Heart left ventricle (tissue), 16 donors: ENCODE measurements at regions of chr17 and their contacts with region 1.

Region 1: DNA sequence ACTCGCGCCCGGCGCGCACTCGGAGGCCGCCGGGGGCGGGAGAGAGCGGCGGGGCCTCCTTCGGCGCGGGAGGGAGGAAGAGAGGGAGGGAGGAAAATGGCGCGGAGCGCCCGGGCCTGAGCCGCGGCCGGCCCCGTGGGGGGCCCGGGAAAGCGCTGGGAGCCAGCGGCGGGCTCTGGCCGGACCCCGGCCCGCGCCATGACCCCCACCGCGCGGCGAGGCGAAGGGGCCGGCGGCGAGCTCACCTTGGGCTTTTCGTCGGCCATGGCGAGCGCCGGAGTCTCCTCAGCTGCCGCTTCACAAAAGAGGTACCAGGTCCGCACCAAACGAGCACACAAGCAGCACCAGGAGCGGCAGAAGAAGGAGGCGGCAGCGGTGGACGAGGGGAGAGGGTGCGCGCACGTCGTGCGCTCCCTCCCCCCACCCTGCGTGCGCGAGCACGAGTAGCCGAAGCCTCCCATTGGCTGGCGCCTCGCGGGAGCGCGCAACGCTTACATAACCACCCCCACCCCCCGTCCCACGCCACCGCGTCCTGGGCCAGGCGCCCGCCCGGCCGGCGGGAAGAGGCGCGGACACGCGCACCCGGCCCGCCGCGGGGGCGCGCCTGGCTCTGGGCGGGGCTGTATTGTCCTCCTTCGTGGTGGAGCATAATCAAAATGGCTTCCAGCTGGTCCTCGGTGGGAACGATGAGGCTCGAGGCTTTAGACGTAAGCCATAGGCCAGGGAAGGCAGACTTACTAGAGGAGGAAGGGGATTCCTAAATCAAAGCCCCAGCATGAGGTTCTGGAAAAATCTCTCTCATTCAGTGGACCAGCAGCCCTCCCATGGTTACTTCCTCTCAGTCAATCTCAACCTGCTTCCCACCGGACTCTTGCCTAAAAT is at the start of gene SUMO2:
- DNase-seq: peak; percentile 95 to 98 (median 96)
- ATAC-seq: peak; percentile 91 to 96 (median 96)
- H3K4me3 ChIP-seq: peak within 1 kb of the TSS; percentile 62 to 98 (median 90)
- H3K27ac ChIP-seq: peak within 1 kb of the TSS; percentile 94 to 100 (median 100)
- H3K4me1 ChIP-seq: peaks cover 0 to 37% (median 23%) of the 10 kb centered on the region in 12 donors
- H3K27me3 ChIP-seq: no peaks in the 10 kb centered on the region
- CTCF ChIP-seq: peak in 6 of 12 donors; percentile 24 to 54 (median 32)
- POLR2A ChIP-seq: peak in 1 of 2 donors; percentile 70
- total RNA-seq, gene SUMO2: 50.1 to 277 (median 207) TPM

Region 2: GRCh38 chr17:74904687-74905409 is 278.0 kb before region 1 on chr17:
- intact Hi-C with region 1: no loop called
- DNase-seq: no peak
- ATAC-seq: no peak
- H3K4me3 ChIP-seq: no peak overlapping the region
- H3K27ac ChIP-seq: no peak overlapping the region
- H3K4me1 ChIP-seq: no peaks in the 10 kb centered on the region
- H3K27me3 ChIP-seq: peaks cover 0 to 18% (median 3%) of the 10 kb centered on the region in 9 donors
- CTCF ChIP-seq: no peak
- POLR2A ChIP-seq: no peak

Region 3: DNA sequence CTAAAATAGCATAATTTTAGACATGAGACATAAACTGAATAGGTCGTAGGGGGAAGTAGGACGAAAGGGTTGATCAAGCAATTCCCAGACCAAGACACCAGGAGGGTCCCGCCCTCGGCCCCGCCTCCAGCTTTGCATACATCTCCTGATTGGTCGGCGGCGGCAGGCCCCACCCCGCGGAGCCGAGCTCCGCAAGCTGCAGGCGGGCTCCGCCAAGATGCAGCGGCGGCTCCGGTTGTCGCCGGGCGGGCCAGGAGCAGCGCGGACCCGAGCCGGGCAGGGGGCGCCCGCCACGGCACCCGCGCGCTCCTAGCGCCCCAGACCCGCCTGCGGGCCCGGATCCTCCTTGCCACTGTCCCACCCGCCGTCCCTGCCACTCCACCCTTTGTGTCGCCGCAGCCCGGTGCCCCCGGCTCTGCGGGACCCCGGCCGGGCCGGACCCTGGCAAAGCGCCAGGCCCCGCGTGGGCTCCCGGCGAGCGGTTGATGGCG is 195.3 kb before region 1 on chr17 and contains the start of gene CDR2L:
- intact Hi-C with region 1: loop called in 1 of 10 experiments (anchors 10 kb)
- DNase-seq: peak; percentile 97 to 99 (median 97)
- ATAC-seq: peak; percentile 87 to 95 (median 91)
- H3K4me3 ChIP-seq: peak within 1 kb of the TSS; percentile 63 to 92 (median 84)
- H3K27ac ChIP-seq: peak within 1 kb of the TSS; percentile 92 to 99 (median 96)
- H3K4me1 ChIP-seq: peaks cover 3 to 48% (median 29%) of the 10 kb centered on the region in 12 donors
- H3K27me3 ChIP-seq: no peaks in the 10 kb centered on the region
- CTCF ChIP-seq: peak in 1 of 12 donors; percentile 5
- POLR2A ChIP-seq: peak; percentile 96 to 100
- total RNA-seq, gene CDR2L: 13.0 to 56.4 (median 18.1) TPM

Region 4: GRCh38 chr17:75051941-75052340 is 130.9 kb before region 1 on chr17:
- intact Hi-C with region 1: loop called in 1 of 10 experiments (anchors 5 kb)
- DNase-seq: no peak
- ATAC-seq: no peak
- H3K4me3 ChIP-seq: no peak overlapping the region
- H3K27ac ChIP-seq: no peak overlapping the region
- H3K4me1 ChIP-seq: peaks cover 0 to 23% (median 15%) of the 10 kb centered on the region in 12 donors
- H3K27me3 ChIP-seq: no peaks in the 10 kb centered on the region
- CTCF ChIP-seq: no peak
- POLR2A ChIP-seq: no peak

Region 5: DNA sequence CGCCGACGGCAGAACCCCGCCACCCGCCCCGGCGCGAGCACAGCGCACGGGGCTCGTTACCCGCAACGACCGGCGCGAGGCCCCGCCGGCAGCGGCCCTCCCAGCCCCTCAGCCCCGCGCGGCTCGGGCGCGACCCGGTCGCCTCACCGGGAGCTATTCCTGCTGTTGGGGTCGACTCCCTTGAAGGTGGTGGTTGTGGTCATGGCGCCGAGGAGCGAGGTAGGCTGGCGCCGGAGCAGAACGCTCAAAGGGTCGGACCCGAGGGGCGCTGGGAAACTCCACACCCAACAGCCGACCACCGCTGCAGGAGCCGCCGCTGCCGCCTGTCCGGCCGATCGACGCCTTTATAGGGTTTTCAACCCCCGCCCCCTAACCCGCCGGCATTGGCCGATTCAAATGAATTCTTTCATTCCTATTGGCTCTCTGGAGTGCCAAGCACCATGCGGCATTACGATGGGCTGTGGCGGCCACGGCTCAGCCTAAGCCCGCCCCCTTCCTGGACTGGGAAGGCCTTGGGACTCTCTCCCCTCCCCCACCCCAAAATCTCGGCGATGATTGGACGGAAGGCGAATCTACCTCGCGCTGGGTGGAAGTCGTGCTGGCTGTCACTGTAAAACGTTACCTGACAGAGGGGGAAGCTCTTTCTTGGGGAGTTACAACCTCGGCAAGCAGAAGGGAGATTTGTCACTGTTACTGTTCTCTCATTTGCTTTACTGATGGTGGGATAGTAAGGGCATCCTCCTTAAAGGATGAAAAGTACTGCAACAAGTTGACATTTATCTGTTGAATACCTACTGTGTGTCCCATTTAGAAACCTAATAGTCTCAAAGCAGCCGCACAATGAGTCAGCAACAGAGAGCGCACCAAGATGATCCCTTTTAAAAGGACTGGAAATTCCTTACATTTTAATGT is 28.4 kb before region 1 on chr17 and contains the start of gene JPT1:
- intact Hi-C with region 1: loop called in 1 of 10 experiments (anchors 2 kb)
- DNase-seq: peak; percentile 98 to 99 (median 99)
- ATAC-seq: peak; percentile 100
- H3K4me3 ChIP-seq: peak within 1 kb of the TSS; percentile 58 to 96 (median 82)
- H3K27ac ChIP-seq: peak within 1 kb of the TSS in 11 of 12 donors; percentile 45 to 87 (median 68)
- H3K4me1 ChIP-seq: peaks cover 0 to 21% (median 8%) of the 10 kb centered on the region in 12 donors
- H3K27me3 ChIP-seq: no peaks in the 10 kb centered on the region
- CTCF ChIP-seq: no peak
- POLR2A ChIP-seq: peak; percentile 87 to 99
- total RNA-seq, gene JPT1: 10.4 to 60.8 (median 16.0) TPM

Region 6: DNA sequence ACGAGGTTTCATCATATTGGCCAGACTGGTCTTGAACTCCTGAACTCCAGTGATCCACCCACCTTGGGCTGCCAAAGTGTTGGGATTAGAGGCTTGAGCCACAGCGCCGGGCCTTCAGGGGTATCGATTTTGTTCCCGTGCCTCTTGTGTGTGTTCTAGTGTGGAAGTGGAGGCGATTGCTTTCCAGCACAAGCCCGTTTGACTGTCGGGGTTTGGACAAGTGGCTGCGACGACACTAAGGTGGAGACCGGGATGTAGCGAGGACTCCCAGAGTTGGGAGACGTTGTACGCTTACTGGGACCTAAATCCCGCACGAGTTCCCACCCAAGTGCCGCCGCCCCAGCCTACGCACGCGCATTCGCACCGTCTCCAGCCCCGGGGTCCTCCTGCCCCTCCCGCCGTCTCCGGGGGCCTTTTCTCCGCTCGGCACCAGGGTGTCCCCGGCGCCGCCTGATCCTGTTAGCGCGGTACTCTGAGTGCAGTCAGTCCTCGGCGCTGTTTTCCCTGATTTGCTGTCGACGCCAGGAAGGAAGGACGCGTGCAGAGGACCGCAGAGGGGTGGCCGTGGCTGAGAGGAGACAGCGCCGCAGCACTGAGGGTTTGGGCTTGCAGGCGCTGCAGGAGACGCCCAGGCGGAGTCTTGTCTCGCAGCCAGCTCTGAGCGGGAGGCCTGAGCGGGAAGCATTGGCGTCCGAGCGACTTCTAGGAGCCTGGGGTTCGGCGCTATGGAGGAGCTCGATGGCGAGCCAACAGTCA is 22.4 kb after region 1 on chr17 and contains the start of gene NUP85:
- intact Hi-C with region 1: loop called in 1 of 10 experiments (anchors 2 kb)
- DNase-seq: peak; percentile 95 to 97 (median 96)
- ATAC-seq: peak; percentile 94 to 98 (median 98)
- H3K4me3 ChIP-seq: peak within 1 kb of the TSS; percentile 63 to 99 (median 88)
- H3K27ac ChIP-seq: peak within 1 kb of the TSS; percentile 83 to 99 (median 96)
- H3K4me1 ChIP-seq: peaks cover 0 to 29% (median 19%) of the 10 kb centered on the region in 12 donors
- H3K27me3 ChIP-seq: no peaks in the 10 kb centered on the region
- CTCF ChIP-seq: no peak
- POLR2A ChIP-seq: peak in 1 of 2 donors; percentile 67
- total RNA-seq, gene NUP85: 9.4 to 40.9 (median 21.5) TPM